PC-9 (cell line): ENCODE measurements at regions of chr6 and their contacts with region 1.

Region 1: DNA sequence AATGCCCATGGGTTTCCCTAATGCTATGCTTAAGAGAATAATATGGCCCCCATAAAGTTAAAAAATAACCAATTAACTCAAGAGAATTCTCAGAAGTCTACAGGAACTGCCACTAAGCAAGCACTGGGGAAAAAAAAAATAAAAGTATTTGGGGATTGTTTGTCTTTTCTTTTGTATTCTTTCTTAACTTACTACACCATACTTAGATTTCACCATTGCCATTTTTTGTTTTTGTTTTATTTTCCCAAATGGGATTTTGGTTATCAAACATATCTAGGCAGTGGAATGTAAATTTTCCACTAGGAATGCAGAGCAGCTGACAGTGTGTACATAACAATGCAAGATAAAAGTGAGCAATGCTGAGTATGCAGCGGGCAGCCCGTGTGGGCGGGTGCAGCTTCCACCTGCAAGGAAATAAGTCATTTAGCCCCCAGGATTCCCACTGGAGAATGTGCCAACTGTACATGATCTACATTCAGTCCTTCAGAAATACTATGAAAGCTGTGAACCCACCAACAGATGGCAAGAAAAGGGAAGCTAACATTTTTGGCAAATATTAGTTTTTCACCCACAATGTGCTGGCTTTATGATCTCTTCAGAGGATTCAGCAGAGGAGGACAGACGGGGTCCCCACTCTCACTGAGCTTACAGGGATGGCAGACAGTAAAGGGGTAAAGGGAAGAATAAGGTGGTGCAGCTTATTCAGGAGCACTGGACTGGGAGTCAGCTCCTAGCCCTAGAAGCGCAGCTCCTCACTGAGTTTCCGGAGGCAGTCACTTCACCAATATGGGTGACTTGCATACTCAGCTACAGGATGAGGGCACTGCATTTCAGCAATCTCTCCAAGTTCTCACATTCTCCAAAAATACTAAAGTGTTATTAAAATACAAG is 44.4 kb downstream of the DCDC2 start:
- DNase-seq: peak; percentile 70 to 86
- H3K4me3 ChIP-seq: 0 out of 2 replicates have a peak overlapping the region, but pooled peaks have one; percentile 6
- H3K27ac ChIP-seq: no peak overlapping the region
- H3K4me1 ChIP-seq: peaks cover 14% of the 10 kb centered on the region
- H3K27me3 ChIP-seq: no peaks in the 10 kb centered on the region
- CTCF ChIP-seq: no peak

Region 2: DNA sequence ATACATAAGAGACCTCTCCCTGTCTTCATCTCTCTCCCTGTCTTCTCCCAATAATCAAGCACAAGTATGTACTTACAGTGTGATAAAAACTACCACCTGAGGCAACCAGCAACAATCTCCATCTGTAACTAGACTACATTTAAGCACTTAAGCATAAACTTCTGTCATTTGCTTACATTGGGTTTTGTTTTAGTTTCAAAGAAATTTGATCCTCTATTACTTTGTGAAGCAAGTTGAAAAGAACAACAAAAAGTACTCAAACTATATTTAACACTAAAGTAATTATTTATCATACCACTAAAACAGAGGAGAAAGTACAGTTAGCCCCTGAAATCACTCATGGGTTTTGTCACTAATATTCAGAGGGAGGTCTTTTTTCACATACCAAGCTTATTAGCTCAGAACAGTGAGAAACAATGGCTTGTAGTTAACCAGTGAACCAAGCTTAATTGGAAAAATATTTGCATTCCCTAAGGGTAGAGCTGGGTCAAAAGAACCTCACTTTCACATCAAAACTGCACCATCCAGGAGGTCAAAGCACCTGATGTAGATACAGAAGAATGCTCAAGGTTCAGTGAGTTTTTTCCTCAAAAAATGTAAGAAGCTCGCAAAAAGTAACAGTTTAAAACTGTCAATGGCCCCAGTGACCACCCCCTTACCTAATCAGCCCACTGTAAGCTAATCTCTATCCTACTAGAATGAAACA is 10.3 kb after region 1 on chr6:
- CTCF ChIA-PET with region 1: interaction called, 3 read pairs
- POLR2A ChIA-PET with region 1: interaction called, 11 read pairs
- intact Hi-C with region 1: loop called (anchors 1 kb)
- DNase-seq: peak; percentile 12 to 92
- H3K4me3 ChIP-seq: peak overlapping the region; percentile 15; the same call in 1 of the 2 replicates
- H3K27ac ChIP-seq: peak overlapping the region; percentile 87
- H3K4me1 ChIP-seq: peaks cover 28% of the 10 kb centered on the region
- H3K27me3 ChIP-seq: no peaks in the 10 kb centered on the region
- CTCF ChIP-seq: no peak

Region 3: DNA sequence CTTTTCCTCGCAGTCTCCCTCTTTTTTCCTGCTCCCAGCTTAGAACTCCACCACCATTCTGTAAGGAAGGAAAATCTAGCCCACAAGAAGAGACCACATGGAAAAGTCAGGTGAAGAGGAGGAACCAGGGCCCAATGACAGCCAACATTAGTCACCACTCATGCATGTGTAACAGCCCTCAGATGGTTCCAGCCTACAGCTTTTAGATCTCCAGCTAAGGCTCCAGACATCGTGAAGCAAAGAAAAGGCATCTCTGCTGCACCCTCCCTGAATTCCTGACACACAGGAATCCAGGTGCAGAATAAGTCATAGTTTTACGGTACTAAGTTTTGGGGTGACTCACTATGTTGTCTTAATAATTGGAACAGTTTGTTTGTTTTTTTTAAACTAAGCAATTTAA is 18.8 kb after region 1 on chr6:
- CTCF ChIA-PET with region 1: interaction called, 3 read pairs
- POLR2A ChIA-PET with region 1: no interaction called
- intact Hi-C with region 1: loop called (anchors 1 kb)
- DNase-seq: peak; percentile 69 to 93
- H3K4me3 ChIP-seq: no peak overlapping the region
- H3K27ac ChIP-seq: peak overlapping the region; percentile 55
- H3K4me1 ChIP-seq: peaks cover 16% of the 10 kb centered on the region
- H3K27me3 ChIP-seq: no peaks in the 10 kb centered on the region
- CTCF ChIP-seq: no peak

Region 4: DNA sequence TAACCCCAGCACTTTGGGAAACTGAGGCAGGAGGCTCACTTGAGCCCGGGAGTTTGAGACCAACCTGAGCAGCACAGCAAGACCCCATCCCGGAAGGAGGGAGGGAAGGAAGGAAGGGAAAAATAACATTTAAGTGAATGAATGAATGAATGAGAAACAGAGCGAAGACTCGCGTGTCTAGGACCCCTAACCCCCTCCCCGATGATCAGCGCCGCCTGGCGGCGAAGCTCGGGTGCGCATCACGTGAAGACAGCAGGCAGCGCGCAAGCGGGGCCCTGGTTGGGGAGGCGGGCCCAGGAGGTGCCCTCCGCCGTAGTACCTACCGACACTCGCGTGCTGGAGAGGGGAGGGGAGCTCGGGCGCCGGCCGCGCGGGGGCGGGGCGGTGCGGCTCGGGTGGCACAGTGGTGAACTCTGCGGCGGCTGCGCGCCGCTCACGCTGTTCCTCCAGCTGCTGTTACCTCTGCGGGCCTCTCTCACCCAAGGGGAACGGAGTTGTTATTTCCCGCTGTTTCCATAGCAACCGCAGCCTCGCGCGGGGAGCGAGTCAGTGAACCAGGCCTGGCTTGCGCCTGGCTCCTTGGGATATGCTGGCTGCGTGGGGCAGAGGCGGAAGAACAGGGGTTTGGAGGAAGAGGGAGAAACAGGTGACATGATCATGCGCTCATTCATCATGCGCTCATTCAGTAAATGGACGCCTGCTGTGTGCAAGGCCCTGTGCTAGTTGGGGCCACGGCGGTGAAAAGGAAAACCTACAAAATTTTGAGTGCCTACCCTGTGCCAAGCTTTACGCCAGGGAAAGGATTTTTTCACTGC is 46.4 kb after region 1 on chr6:
- CTCF ChIA-PET with region 1: interaction called, 5 read pairs
- POLR2A ChIA-PET with region 1: interaction called, 4 read pairs
- intact Hi-C with region 1: loop called (anchors 5 kb)
- DNase-seq: peak; percentile 83 to 89
- H3K4me3 ChIP-seq: peak overlapping the region; percentile 63
- H3K27ac ChIP-seq: peak overlapping the region; percentile 14; the same call in 1 of the 2 replicates
- H3K4me1 ChIP-seq: peaks cover 8% of the 10 kb centered on the region
- H3K27me3 ChIP-seq: no peaks in the 10 kb centered on the region
- CTCF ChIP-seq: peak; percentile 95

Region 5: DNA sequence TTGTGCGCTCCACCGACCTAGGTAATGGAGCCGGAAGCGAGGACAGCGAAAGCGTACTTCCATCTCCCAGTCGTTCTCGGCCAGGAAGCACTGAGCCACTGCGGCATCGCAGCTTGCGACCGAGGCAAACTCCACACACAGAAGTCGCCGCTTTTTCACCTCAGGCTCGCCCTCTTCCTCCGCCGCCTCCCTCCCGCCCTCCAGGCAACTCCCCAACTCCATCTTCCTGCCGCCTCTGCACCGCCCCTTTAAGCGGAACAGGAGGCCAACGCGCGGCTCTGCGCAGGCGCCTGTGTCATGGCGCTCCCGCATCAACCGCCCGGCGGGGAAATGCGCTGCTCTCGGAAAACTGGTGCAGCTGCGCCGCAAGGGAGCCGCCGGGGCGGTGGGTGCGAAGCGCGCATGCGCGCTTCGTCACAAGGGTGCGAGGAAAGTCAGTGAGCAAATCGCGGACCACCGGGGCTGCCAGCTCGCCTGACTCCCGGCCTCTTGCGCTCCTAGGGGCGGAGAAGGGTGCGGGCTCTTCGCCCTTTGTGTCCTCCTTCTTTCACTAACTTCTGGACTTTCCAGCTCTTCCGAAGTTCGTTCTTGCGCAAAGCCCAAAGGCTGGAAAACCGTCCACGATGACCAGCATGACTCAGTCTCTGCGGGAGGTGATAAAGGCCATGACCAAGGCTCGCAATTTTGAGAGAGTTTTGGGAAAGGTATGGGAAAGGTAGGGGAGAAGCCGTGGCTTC is 353.3 kb after region 1 on chr6 and contains the starts of genes ACOT13 and TDP2:
- CTCF ChIA-PET with region 1: no interaction called
- POLR2A ChIA-PET with region 1: interaction called, 11 read pairs
- intact Hi-C with region 1: no loop called
- DNase-seq: peak; percentile 87 to 97
- H3K4me3 ChIP-seq: peak within 1 kb of the TSS; percentile 98
- H3K27ac ChIP-seq: peak within 1 kb of the TSS; percentile 97
- H3K4me1 ChIP-seq: peaks cover 39% of the 10 kb centered on the region
- H3K27me3 ChIP-seq: no peaks in the 10 kb centered on the region
- CTCF ChIP-seq: peak; percentile 55; the same call in 1 of the 2 replicates
- total RNA-seq, gene ACOT13: 70.9 and 79.2 TPM in 2 replicates
- total RNA-seq, gene TDP2: 83.0 and 95.8 TPM in 2 replicates